Natural killer cell (primary cell): ENCODE measurements at regions of chr2 and their contacts with region 1.

Region 1: GRCh38 chr2:235061656-235062055 is 109.8 kb downstream of the SH3BP4 start:
- DNase-seq: no peak
- ATAC-seq: no peak
- H3K4me3 ChIP-seq: no peak overlapping the region
- H3K4me3 Mint-ChIP-seq: no peak overlapping the region
- H3K27ac ChIP-seq: no peak overlapping the region
- H3K27ac Mint-ChIP-seq: no peak overlapping the region
- H3K4me1 ChIP-seq: no peaks in the 10 kb centered on the region
- H3K4me1 Mint-ChIP-seq: no peaks in the 10 kb centered on the region
- H3K27me3 ChIP-seq: no peaks in the 10 kb centered on the region
- H3K27me3 Mint-ChIP-seq: peaks cover 13 to 20% of the 10 kb centered on the region in 2 donors
- CTCF ChIP-seq: no peak

Region 2: DNA sequence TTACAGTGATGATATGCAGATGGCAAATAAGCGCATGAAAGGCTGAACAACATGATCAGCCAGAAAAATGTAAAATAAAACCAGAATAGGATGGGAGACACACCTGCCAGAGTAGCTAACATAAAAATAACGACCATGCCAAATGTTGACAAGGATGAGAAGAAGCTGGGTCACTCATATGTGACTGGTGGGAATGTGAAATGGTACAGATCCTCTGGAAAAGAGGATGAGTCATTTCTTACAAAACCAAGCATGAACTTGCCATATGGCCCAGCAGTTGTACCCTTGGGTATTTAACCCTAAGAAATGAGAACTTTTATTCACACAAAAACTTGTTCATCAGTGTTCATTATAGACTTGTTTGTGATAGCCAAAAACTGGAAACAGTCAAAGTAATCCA is 33.9 kb after region 1 on chr2:
- intact Hi-C with region 1: loop called (anchors 2 kb)
- DNase-seq: no peak
- ATAC-seq: no peak
- H3K4me3 ChIP-seq: no peak overlapping the region
- H3K4me3 Mint-ChIP-seq: no peak overlapping the region
- H3K27ac ChIP-seq: no peak overlapping the region
- H3K27ac Mint-ChIP-seq: no peak overlapping the region
- H3K4me1 ChIP-seq: no peaks in the 10 kb centered on the region
- H3K4me1 Mint-ChIP-seq: no peaks in the 10 kb centered on the region
- H3K27me3 ChIP-seq: no peaks in the 10 kb centered on the region
- H3K27me3 Mint-ChIP-seq: peaks cover 13 to 51% of the 10 kb centered on the region in 2 donors
- CTCF ChIP-seq: no peak